CD8-positive, alpha-beta memory T cell (primary cell): ENCODE measurements at regions of chr9 and their contacts with region 1.

Region 1: DNA sequence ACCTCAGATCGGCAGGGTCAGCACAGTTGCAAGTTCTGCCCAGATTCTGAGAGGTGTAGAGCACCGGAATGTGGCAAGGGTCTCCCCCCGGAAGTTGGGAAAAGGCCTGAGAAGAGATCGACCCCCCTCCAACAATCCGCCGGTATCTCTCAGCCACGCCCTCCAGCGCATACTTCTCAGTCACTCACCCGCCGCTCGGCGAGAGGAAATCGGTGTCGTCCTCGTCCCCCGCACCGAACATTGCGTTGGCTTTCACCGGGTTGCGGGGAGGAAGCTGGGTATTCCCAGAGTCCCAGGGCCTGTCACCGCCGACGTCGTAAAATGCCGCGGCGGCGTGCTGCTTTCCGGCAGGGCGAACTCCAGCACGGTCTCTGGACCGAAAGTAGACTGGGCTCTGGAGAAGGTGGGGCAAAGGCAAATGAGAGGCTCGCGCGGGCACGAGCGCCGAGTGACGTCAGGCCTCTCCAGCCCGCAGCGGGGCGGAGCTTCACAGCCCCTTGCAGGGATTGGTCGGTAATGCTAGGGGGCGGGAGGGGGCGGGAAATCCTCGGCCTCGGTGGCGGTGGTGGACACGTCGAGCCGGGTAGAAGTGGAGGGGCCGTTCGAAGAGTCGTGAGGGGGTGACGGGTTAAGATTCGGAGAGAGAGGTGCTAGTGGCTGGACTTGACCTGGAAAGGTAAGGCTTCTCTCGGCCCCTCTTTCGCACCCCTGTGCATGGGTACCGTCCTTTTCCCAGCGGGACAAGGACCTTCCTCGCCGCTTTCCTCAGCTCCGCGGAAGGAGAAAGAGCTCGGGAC is at the starts of genes FKBP15 and SLC31A1:
- DNase-seq: peak; percentile 95 to 97 (median 97)
- H3K4me3 ChIP-seq: peak within 1 kb of the TSS; percentile 96
- H3K4me3 Mint-ChIP-seq: peak within 1 kb of the TSS; percentile 93 to 99 (median 95)
- H3K27ac ChIP-seq: peak within 1 kb of the TSS; percentile 91
- H3K27ac Mint-ChIP-seq: peak within 1 kb of the TSS; percentile 91 to 100 (median 96)
- H3K4me1 ChIP-seq: peaks cover 34% of the 10 kb centered on the region
- H3K4me1 Mint-ChIP-seq: peaks cover 39 to 65% (median 55%) of the 10 kb centered on the region in 3 donors
- H3K27me3 ChIP-seq: no peaks in the 10 kb centered on the region
- H3K27me3 Mint-ChIP-seq: no peaks in the 10 kb centered on the region
- total RNA-seq, gene FKBP15: 29.8 to 30.7 TPM
- total RNA-seq, gene SLC31A1: 13.7 to 15.1 TPM

Region 2: DNA sequence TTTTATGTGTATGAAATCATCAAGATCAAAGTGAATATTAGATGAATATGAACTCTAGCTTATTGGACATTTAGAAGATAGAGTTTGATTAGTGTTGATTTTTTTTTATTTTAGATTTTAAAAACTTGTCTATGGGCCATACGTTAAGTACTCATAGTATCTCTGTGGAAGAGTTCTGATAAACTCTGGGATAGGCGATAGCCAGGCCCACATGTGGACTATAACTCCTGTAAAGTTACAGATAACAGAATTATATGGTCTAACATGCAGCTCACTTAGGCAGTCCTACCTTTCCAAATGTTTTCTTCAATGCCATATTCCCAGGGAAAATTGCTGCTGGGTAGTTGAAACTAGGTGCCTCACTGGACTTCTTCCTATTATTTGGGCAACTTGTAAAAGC is 10.5 kb after region 1 on chr9:
- CTCF ChIA-PET with region 1: interaction called, 6 read pairs
- POLR2A ChIA-PET with region 1: interaction called, 10 read pairs
- DNase-seq: no peak
- H3K4me3 ChIP-seq: no peak overlapping the region
- H3K4me3 Mint-ChIP-seq: no peak overlapping the region
- H3K27ac ChIP-seq: no peak overlapping the region
- H3K27ac Mint-ChIP-seq: peak overlapping the region in 2 of 8 donors; percentile 69 to 78
- H3K4me1 ChIP-seq: peaks cover 9% of the 10 kb centered on the region
- H3K4me1 Mint-ChIP-seq: peaks cover 23 to 30% (median 29%) of the 10 kb centered on the region in 3 donors
- H3K27me3 ChIP-seq: no peaks in the 10 kb centered on the region
- H3K27me3 Mint-ChIP-seq: no peaks in the 10 kb centered on the region